HCT116 (cell line): ENCODE measurements at regions of chr19 and their contacts with region 1.

Region 1: DNA sequence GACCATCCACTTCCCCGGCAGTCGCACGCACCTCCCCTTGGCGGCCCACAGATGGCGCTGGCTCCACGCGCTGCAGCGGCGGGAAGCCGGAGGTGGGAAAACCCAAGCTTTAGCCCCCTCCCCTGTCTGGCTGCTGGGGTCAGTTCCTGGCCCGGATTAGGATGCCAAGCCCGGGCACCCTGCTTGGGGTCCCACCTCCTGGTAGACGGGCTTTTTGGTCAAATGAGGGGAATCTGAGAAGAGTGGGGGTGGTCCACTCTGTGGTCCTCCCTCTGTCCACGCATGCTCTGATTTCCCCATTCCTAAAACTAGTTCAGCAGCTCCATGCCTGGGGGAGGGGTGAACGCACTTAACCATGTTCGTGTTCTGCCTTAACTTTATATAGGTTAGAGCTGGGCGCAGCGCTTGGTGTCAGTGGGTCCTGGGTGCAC is 8.1 kb upstream of the ADGRE2 start:
- DNase-seq: no peak
- ATAC-seq: peak; percentile 84
- H3K4me3 ChIP-seq: peak overlapping the region; percentile 22 to 39
- H3K27ac ChIP-seq: no peak overlapping the region
- H3K4me1 ChIP-seq: peaks cover 14 to 24% of the 10 kb centered on the region in 2 experiments; a peak in 3 of 4 replicates
- H3K27me3 ChIP-seq: no peaks in the 10 kb centered on the region
- CTCF ChIP-seq: peak; percentile 70 to 95 (median 90); a peak in 5 of 6 replicates
- POLR2A ChIP-seq: no peak
- RAD21 ChIP-seq: peak; percentile 85

Region 2: GRCh38 chr19:14889994-14890642 is 103.7 kb after region 1 on chr19:
- CTCF ChIA-PET with region 1: interaction called, 4 read pairs
- POLR2A ChIA-PET with region 1: no interaction called
- RAD21 ChIA-PET with region 1: interaction called in 1 of 2 experiments, 4 read pairs
- intact Hi-C with region 1: loop called (anchors 2 kb)
- DNase-seq: no peak
- ATAC-seq: no peak
- H3K4me3 ChIP-seq: no peak overlapping the region
- H3K27ac ChIP-seq: no peak overlapping the region
- H3K4me1 ChIP-seq: peaks cover 3 to 8% of the 10 kb centered on the region in 2 experiments; a peak in 2 of 4 replicates
- H3K27me3 ChIP-seq: peaks cover 42% of the 10 kb centered on the region
- CTCF ChIP-seq: no peak
- POLR2A ChIP-seq: no peak
- RAD21 ChIP-seq: no peak